Activated naive CD4-positive, alpha-beta T cell treated with anti-CD3 and anti-CD28 coated beads, Interleukin-2, amount 10 ng/mL, durations not matched to agents 7 days and 5 days (primary cell): ENCODE measurements at regions of chr9 and their contacts with region 1.

Region 1: GRCh38 chr9:34403554-34404380 is 27.1 kb upstream of the MYORG start:
- DNase-seq: peak; percentile 71
- H3K4me3 Mint-ChIP-seq: no peak overlapping the region
- H3K27ac Mint-ChIP-seq: no peak overlapping the region
- H3K4me1 Mint-ChIP-seq: no peaks in the 10 kb centered on the region
- H3K27me3 Mint-ChIP-seq: no peaks in the 10 kb centered on the region

Region 2: GRCh38 chr9:34185778-34186551 is 217.8 kb before region 1 on chr9:
- CTCF ChIA-PET with region 1: no interaction called
- DNase-seq: no peak
- H3K4me3 Mint-ChIP-seq: no peak overlapping the region
- H3K27ac Mint-ChIP-seq: no peak overlapping the region
- H3K4me1 Mint-ChIP-seq: peaks cover 22% of the 10 kb centered on the region
- H3K27me3 Mint-ChIP-seq: no peaks in the 10 kb centered on the region

Region 3: GRCh38 chr9:34392511-34392910 is 11.3 kb before region 1 on chr9:
- CTCF ChIA-PET with region 1: interaction called, 15 read pairs
- DNase-seq: no peak
- H3K4me3 Mint-ChIP-seq: no peak overlapping the region
- H3K27ac Mint-ChIP-seq: no peak overlapping the region
- H3K4me1 Mint-ChIP-seq: no peaks in the 10 kb centered on the region
- H3K27me3 Mint-ChIP-seq: peaks cover 23% of the 10 kb centered on the region